ENCODE measurements at regions of chr11 and their contacts with region 1.

Region 1: GRCh38 chr11:122153746-122154145 is 37.7 kb upstream of the BLID start:
- DNase-seq: no peak
- ATAC-seq: no peak
- H3K4me3 ChIP-seq: no peak overlapping the region
- H3K27ac ChIP-seq: peak overlapping the region; percentile 95
- H3K4me1 ChIP-seq: peaks cover 84 to 100% of the 10 kb centered on the region in 2 experiments
- H3K27me3 ChIP-seq: no peaks in the 10 kb centered on the region
- CTCF ChIP-seq: no peak
- POLR2A ChIP-seq: no peak
- RAD21 ChIP-seq: no peak

Region 2: DNA sequence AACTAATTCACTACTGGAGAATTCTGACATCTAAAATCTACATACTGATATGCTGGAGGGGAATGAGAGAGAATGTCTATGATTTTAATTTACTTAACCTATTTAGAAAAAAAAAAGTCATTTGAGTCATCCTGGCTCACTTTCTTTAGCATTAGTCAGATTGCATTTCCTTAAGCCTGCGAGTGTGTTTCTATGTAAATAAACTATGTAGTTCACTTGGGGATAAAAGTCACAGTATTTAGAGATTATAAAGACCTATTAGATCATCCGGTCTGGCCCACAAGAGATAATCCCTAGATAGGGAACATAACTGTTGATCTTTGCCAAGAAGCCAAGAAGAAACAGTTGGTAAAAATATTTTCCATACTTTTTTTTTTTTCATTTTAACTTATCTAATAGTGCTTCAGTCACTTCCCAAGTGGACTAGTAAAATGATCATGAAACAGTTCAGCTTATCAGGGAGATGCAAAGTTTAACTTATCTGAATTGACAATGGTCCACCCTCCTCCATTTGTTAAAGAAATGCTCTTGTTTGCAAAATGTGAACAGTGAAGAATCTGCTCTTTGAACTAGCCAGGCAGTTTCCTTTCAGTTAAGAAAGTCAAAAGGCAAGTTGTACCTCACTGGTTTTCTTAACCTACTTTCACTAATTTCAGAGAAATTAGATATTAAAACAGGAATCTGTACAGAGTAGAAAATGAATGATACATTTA is 16.5 kb before region 1 on chr11:
- CTCF ChIA-PET with region 1: no interaction called
- POLR2A ChIA-PET with region 1: interaction called, 11 read pairs
- RAD21 ChIA-PET with region 1: no interaction called
- intact Hi-C with region 1: no loop called
- DNase-seq: peak; percentile 79
- ATAC-seq: peak; percentile 37
- H3K4me3 ChIP-seq: no peak overlapping the region; a peak in 1 of 4 replicates
- H3K27ac ChIP-seq: peak overlapping the region; percentile 95
- H3K4me1 ChIP-seq: peaks cover 93 to 100% of the 10 kb centered on the region in 2 experiments
- H3K27me3 ChIP-seq: no peaks in the 10 kb centered on the region
- CTCF ChIP-seq: no peak
- POLR2A ChIP-seq: no peak
- RAD21 ChIP-seq: no peak; the same call in 1 of the 2 replicates

Region 3: GRCh38 chr11:122167100-122167499 is 13.4 kb after region 1 on chr11:
- CTCF ChIA-PET with region 1: no interaction called
- POLR2A ChIA-PET with region 1: interaction called, 18 read pairs
- RAD21 ChIA-PET with region 1: interaction called in 1 of 2 experiments, 4 read pairs
- intact Hi-C with region 1: no loop called
- DNase-seq: peak; percentile 87
- ATAC-seq: peak; percentile 63
- H3K4me3 ChIP-seq: no peak overlapping the region
- H3K27ac ChIP-seq: peak overlapping the region; percentile 95
- H3K4me1 ChIP-seq: peaks cover 93 to 96% of the 10 kb centered on the region in 2 experiments
- H3K27me3 ChIP-seq: no peaks in the 10 kb centered on the region
- CTCF ChIP-seq: no peak
- POLR2A ChIP-seq: no peak
- RAD21 ChIP-seq: peak; percentile 33; the same call in 1 of the 2 replicates